Caco-2 (cell line): ENCODE measurements at regions of chr13 and their contacts with region 1.

Region 1: GRCh38 chr13:26957182-26957581 is 196.6 kb upstream of the GPR12 start:
- DNase-seq: peak; percentile 72 to 76
- H3K4me3 ChIP-seq: no peak overlapping the region
- H3K4me3 Mint-ChIP-seq: peak overlapping the region; percentile 38
- H3K27ac Mint-ChIP-seq: peak overlapping the region; percentile 90
- H3K4me1 ChIP-seq: peaks cover 91% of the 10 kb centered on the region
- H3K4me1 Mint-ChIP-seq: peaks cover 56% of the 10 kb centered on the region
- H3K27me3 ChIP-seq: no peaks in the 10 kb centered on the region
- H3K27me3 Mint-ChIP-seq: no peaks in the 10 kb centered on the region
- CTCF ChIP-seq: no peak

Region 2: DNA sequence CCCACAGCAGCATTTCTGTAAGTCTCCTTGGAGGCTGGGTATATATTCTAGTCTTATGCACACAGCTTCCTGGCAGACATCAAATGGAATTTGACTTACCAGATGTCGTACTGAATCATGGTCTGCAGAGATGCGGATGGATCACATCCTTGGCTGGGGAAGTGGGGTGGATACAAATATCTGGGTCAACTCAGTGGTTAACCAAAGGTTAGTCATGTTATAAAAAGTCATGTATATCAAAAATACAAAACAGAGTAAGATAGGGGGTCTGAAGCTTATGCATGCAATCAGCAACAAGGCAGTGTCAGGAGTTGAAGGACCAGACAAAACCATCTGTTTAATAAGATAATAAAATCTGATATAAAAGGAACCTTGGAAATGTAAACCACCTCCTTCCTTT is 337.8 kb before region 1 on chr13:
- CTCF ChIA-PET with region 1: no interaction called
- POLR2A ChIA-PET with region 1: no interaction called
- intact Hi-C with region 1: no loop called
- DNase-seq: no peak
- H3K4me3 ChIP-seq: no peak overlapping the region
- H3K4me3 Mint-ChIP-seq: no peak overlapping the region
- H3K27ac Mint-ChIP-seq: no peak overlapping the region
- H3K4me1 ChIP-seq: 0 out of 2 replicates have a peak, but pooled peaks cover 5% of the 10 kb centered on the region
- H3K4me1 Mint-ChIP-seq: peaks cover 5% of the 10 kb centered on the region
- H3K27me3 ChIP-seq: no peaks in the 10 kb centered on the region
- H3K27me3 Mint-ChIP-seq: peaks cover 16% of the 10 kb centered on the region
- CTCF ChIP-seq: no peak

Region 3: GRCh38 chr13:26881178-26881577 is 76.0 kb before region 1 on chr13:
- CTCF ChIA-PET with region 1: no interaction called
- POLR2A ChIA-PET with region 1: no interaction called
- intact Hi-C with region 1: no loop called
- DNase-seq: no peak
- H3K4me3 ChIP-seq: no peak overlapping the region
- H3K4me3 Mint-ChIP-seq: no peak overlapping the region
- H3K27ac Mint-ChIP-seq: no peak overlapping the region
- H3K4me1 ChIP-seq: no peaks in the 10 kb centered on the region
- H3K4me1 Mint-ChIP-seq: no peaks in the 10 kb centered on the region
- H3K27me3 ChIP-seq: no peaks in the 10 kb centered on the region; the same call in 1 of the 2 replicates
- H3K27me3 Mint-ChIP-seq: peaks cover 28% of the 10 kb centered on the region
- CTCF ChIP-seq: no peak

Region 4: GRCh38 chr13:26978081-26978820 is 21.1 kb after region 1 on chr13:
- CTCF ChIA-PET with region 1: interaction called, 59 read pairs
- POLR2A ChIA-PET with region 1: interaction called, 27 read pairs
- intact Hi-C with region 1: loop called (anchors 1 kb)
- DNase-seq: peak; percentile 84 to 94
- H3K4me3 ChIP-seq: no peak overlapping the region
- H3K4me3 Mint-ChIP-seq: peak overlapping the region; percentile 12
- H3K27ac Mint-ChIP-seq: peak overlapping the region; percentile 80
- H3K4me1 ChIP-seq: peaks cover 77% of the 10 kb centered on the region
- H3K4me1 Mint-ChIP-seq: peaks cover 69% of the 10 kb centered on the region
- H3K27me3 ChIP-seq: no peaks in the 10 kb centered on the region
- H3K27me3 Mint-ChIP-seq: no peaks in the 10 kb centered on the region
- CTCF ChIP-seq: no peak

Region 5: GRCh38 chr13:27523346-27524073 is 566.3 kb after region 1 on chr13:
- CTCF ChIA-PET with region 1: no interaction called
- POLR2A ChIA-PET with region 1: no interaction called
- intact Hi-C with region 1: no loop called
- DNase-seq: no peak
- H3K4me3 ChIP-seq: no peak overlapping the region
- H3K4me3 Mint-ChIP-seq: no peak overlapping the region
- H3K27ac Mint-ChIP-seq: no peak overlapping the region
- H3K4me1 ChIP-seq: no peaks in the 10 kb centered on the region
- H3K4me1 Mint-ChIP-seq: no peaks in the 10 kb centered on the region
- H3K27me3 ChIP-seq: no peaks in the 10 kb centered on the region
- H3K27me3 Mint-ChIP-seq: peaks cover 12% of the 10 kb centered on the region
- CTCF ChIP-seq: no peak

Region 6: DNA sequence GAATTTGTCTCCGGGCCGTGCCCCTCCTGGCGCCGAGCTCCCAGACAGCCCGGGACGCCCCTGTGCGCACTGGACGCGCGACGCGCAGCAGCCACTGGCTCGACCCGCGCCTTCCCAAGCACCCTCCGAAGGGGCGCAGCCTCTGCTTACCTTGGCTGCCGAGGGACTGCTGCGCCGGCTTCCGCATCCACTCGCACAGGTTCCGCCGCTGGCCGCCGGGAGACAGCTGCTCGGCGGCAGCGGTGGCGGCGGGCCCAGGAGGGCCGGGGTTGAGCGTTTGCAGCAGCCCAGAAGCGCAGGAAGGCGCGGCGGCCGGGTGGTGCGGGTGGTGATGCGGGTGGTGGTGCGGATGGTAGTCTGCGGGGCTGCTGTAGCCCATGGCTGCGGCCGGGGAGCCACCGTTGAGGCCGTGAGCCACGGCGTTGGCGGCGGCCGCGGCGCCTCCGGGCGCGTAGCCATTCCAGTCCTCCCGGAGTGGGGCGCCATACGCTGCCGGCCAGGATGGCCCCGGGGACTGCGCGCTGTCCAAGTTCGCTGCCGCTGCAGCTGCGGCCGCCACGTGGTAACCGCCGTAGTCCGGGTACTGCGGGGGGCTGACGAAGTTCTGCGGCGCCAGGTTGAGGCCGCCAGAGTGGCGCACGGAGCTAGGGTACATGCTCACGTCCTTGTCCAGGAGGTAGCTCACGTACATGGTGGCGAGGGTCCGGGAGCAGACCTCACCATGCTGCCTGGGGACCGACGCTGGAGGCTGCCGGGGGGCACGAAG is 1011.3 kb after region 1 on chr13:
- CTCF ChIA-PET with region 1: no interaction called
- POLR2A ChIA-PET with region 1: no interaction called
- intact Hi-C with region 1: loop called (anchors 5 kb)
- DNase-seq: peak in 1 of 2 experiments; percentile 71
- H3K4me3 ChIP-seq: peak overlapping the region; percentile 96
- H3K4me3 Mint-ChIP-seq: peak overlapping the region; percentile 99
- H3K27ac Mint-ChIP-seq: peak overlapping the region; percentile 65
- H3K4me1 ChIP-seq: peaks cover 47% of the 10 kb centered on the region
- H3K4me1 Mint-ChIP-seq: peaks cover 10% of the 10 kb centered on the region
- H3K27me3 ChIP-seq: no peaks in the 10 kb centered on the region
- H3K27me3 Mint-ChIP-seq: no peaks in the 10 kb centered on the region
- CTCF ChIP-seq: peak in 1 of 2 experiments; percentile 27